Activated T-helper 1 cell treated with anti-CD3 and anti-CD28 coated beads, Interleukin-12 subunit alpha, Interleukin-12 subunit beta, Interleukin-2, Interleukin-4 antibody, amounts not matched to agents 30 ng/mL and 10 ng/mL and 1 ng/mL, durations not matched to agents 14 hours and 24 hours and 36 hours (primary cell): ENCODE measurements at regions of chr11 and their contacts with region 1.

Region 1: GRCh38 chr11:46700241-46701077 is at the starts of genes ARHGAP1 and ZNF408:
- DNase-seq: peak; percentile 98
- H3K4me3 Mint-ChIP-seq: peak within 1 kb of the TSS; percentile 99
- H3K27ac Mint-ChIP-seq: peak within 1 kb of the TSS; percentile 95
- H3K4me1 Mint-ChIP-seq: peaks cover 48% of the 10 kb centered on the region
- H3K27me3 Mint-ChIP-seq: peaks cover 2% of the 10 kb centered on the region
- total RNA-seq, gene ARHGAP1: 69.8 and 71.7 TPM in 2 replicates
- total RNA-seq, gene ZNF408: 12.9 and 13.9 TPM in 2 replicates

Region 2: DNA sequence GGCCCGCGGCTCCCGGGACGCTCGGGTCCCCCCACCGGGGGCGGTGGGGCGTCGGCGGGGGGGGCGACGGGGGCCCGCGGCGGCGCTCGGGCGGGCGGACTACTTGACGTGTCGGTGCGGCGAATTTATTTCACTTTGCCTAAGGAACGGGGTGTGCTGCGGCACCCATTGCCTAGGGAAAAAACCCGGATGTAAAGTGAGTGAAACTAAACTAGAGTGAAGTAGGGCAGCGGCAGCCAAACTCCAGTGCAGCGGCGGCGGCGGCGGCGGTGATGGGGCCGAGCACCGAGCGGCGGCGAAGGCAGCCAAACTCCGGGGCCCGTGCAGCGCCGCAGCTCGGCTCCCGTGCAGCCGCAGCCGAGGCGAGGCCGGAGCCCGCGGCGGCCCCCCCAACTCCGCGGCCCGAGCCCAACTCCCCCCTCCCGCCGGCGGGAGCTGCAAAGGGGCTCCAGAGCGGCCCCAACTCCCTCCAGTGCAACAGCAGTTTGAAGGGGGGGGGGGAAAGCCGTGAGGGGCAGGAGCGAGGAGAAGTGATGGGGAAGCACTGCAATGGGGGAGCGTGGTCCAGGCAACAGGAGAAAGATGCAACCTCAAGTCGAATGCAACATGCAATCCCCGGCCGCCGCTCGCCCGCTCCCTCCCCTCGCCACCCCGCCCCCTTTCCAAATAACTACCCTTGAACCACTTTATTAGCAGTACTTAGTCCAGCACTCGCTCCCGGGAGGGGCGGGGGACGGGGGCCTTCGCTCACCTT is 578.6 kb before region 1 on chr11:
- intact Hi-C with region 1: loop called (anchors 2 kb)
- DNase-seq: peak; percentile 76
- H3K4me3 Mint-ChIP-seq: peak overlapping the region; percentile 86
- H3K27ac Mint-ChIP-seq: peak overlapping the region; percentile 91
- H3K4me1 Mint-ChIP-seq: peaks cover 40% of the 10 kb centered on the region
- H3K27me3 Mint-ChIP-seq: no peaks in the 10 kb centered on the region

Region 3: DNA sequence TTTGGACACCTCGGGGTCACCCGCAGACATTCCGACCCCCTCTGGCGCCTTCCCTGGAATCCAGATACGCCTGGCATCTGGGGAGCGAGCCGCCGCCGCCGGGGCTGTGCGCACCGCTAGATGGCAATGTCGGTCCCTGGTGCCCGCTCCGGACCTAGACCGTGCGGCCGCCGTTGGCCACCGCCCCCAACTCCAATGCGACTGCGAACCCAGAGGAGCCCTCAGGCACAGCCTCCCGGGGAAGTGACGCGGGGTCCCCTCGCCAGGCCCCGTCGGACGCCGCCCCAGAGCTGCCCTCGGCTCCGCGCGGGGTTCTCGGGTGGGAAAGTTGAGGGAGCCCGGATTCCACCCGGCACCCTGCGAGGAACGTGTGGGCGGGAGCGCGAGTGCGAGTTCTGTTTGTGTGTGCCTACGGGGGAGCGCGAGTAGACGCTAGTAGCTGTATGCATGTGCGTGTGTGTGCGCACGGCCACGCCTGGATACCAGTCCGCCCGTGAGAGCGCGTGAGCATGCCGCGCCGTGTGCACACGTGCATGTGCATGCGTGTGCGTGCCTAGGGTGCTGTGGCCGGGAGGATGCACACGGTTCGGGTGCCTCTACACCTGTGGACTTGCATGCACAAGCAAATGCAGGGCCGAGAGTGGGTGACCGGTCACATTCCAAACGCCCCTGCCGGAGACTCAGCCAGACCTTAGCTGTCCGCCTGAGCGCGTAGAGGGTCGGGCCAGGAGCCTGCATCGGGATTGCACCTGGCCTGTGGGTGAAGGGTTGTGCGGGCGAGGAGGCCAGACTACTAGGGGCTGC is 310.8 kb before region 1 on chr11:
- intact Hi-C with region 1: loop called (anchors 1 kb)
- DNase-seq: peak; percentile 45
- H3K4me3 Mint-ChIP-seq: peak overlapping the region; percentile 60
- H3K27ac Mint-ChIP-seq: no peak overlapping the region
- H3K4me1 Mint-ChIP-seq: peaks cover 23% of the 10 kb centered on the region
- H3K27me3 Mint-ChIP-seq: peaks cover 52% of the 10 kb centered on the region

Region 4: DNA sequence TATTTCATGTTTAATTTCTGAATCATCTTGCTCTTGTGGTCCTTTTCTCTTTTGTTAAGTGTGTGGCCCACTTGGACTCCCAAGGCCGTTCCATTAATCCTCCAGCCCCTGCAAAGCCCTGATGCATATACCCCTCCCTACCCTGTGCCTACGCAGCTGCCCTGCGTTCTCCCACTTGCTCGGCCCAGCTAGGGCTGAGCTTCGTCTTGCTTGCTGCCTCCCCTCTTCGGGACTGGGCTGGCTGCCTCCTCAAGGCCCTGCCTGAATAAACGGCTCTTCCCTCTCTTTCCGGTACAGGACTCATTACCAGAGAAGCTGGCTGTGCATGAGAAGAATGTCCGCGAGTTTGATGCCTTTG is 28.5 kb before region 1 on chr11:
- intact Hi-C with region 1: loop called (anchors 1 kb)
- DNase-seq: no peak
- H3K4me3 Mint-ChIP-seq: peak overlapping the region; percentile 45
- H3K27ac Mint-ChIP-seq: peak overlapping the region; percentile 88
- H3K4me1 Mint-ChIP-seq: peaks cover 53% of the 10 kb centered on the region
- H3K27me3 Mint-ChIP-seq: no peaks in the 10 kb centered on the region

Region 5: GRCh38 chr11:46936138-46937110 is 236.0 kb after region 1 on chr11 and contains the start of gene CSTPP1:
- intact Hi-C with region 1: loop called (anchors 1 kb)
- DNase-seq: peak; percentile 89
- H3K4me3 Mint-ChIP-seq: peak within 1 kb of the TSS; percentile 92
- H3K27ac Mint-ChIP-seq: peak within 1 kb of the TSS; percentile 88
- H3K4me1 Mint-ChIP-seq: peaks cover 14% of the 10 kb centered on the region
- H3K27me3 Mint-ChIP-seq: peaks cover 7% of the 10 kb centered on the region
- total RNA-seq, gene CSTPP1: 15.1 and 16.7 TPM in 2 replicates

Region 6: DNA sequence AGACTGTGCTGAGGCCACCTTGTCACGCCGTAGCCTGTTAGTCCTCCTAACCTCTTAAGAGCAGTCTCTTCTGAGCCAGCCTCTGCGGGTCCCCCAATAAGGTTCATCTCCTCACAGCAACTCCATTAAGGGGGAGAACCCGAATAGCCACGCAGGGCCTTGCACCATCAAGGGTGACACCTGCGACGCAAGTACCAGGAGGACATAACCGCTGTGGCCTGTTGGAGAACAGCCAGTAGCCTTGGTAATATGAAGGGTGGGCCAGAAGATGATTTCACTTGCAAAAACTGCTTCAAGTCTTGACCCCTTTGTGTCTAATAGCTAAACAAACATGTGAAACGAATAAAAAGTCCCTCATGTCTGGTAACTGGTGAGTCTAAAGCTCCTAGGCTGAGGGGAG is 461.4 kb after region 1 on chr11:
- intact Hi-C with region 1: no loop called
- DNase-seq: no peak
- H3K4me3 Mint-ChIP-seq: no peak overlapping the region
- H3K27ac Mint-ChIP-seq: no peak overlapping the region
- H3K4me1 Mint-ChIP-seq: no peaks in the 10 kb centered on the region
- H3K27me3 Mint-ChIP-seq: no peaks in the 10 kb centered on the region

Region 7: DNA sequence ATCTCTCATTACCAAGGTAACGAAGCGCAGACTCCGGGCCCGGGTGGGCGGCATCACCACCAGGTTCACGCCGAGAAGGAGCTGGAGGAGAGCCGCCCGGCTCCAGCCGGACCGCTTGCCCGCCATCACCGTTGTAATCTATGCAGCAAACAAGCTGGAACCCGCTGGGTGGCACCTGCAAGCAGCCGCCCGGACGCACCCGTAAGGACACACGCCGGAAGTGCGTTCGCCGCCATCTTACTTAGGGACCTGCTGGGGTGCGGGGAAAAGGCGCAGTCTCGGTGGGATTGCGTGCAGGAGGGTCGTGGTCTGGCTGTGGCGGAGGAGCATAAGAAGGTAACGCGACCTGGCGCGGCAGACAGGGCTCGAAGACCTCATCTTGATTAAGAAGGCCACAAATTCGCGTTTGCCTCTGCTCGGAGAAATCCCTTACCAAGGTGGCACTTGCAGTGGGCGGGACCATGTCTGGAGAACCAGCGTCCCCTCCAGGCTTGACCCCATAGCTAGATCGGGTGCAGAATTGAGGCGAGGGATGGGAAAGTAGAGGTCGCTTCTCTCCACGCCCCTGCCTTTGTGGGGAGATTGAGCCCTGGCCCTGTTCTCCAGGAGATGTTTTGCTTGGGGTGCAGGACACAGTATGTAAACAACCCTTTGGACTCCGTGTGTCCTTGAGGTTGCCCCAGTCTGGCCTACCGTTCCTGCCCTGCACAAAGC is 548.4 kb after region 1 on chr11 and contains the start of gene ACP2:
- intact Hi-C with region 1: loop called (anchors 2 kb)
- DNase-seq: peak; percentile 82
- H3K4me3 Mint-ChIP-seq: peak within 1 kb of the TSS; percentile 100
- H3K27ac Mint-ChIP-seq: peak within 1 kb of the TSS; percentile 98
- H3K4me1 Mint-ChIP-seq: peaks cover 27% of the 10 kb centered on the region
- H3K27me3 Mint-ChIP-seq: no peaks in the 10 kb centered on the region
- total RNA-seq, gene ACP2: 31.8 and 33.8 TPM in 2 replicates

Region 8: DNA sequence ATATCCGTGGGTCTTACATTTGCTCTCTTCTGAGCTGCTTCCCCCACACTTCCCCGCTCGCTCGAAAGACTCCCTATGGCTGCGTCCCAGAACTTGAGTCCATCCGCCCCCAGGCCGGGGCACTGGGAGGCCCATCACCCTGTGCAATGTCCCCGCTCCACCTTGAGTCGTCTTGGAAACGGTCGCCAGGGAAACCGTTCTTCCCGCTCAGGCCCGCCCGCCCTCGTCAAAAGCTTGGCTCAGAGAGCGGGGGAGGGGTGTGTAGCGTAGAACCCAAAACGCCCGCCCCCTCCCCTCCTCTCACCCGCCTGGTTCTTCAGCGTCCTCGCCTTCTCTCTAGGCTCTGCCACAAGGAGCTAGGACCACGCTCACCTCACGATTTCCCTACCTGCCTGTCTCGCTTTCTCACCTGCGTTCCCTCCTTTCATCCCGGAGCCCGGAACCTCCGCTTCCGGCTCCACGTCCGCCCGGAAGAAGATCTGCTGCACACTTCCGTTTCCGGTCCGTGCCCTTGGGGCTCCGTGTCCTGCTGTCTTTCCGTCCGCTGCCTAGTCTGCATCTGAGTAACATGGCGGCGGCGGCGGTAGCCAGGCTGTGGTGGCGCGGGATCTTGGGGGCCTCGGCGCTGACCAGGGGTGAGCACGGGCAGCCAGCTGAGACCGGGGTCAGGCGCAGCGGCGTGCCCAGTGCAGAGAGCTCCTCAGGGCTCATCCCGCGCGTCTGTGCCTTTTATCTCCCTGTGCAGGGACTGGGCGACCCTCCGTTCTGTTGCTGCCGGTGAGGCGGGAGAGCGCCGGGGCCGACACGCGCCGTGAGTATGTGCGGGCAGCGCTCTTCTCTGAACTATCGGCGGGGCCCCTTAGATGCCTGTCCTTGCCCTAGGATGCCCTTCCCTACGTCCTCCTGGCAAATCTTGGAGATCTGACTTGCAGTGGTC is 878.3 kb after region 1 on chr11 and contains the starts of genes KBTBD4 and NDUFS3:
- intact Hi-C with region 1: loop called (anchors 1 kb)
- DNase-seq: peak; percentile 89
- H3K4me3 Mint-ChIP-seq: peak within 1 kb of the TSS; percentile 96
- H3K27ac Mint-ChIP-seq: peak within 1 kb of the TSS; percentile 98
- H3K4me1 Mint-ChIP-seq: peaks cover 35% of the 10 kb centered on the region
- H3K27me3 Mint-ChIP-seq: no peaks in the 10 kb centered on the region
- total RNA-seq, gene KBTBD4: 16.3 and 19.0 TPM in 2 replicates
- total RNA-seq, gene NDUFS3: 148 and 152 TPM in 2 replicates